Head of caudate nucleus (tissue), 42 donors: ENCODE measurements at regions of chr7 and their contacts with region 1.

Region 1: DNA sequence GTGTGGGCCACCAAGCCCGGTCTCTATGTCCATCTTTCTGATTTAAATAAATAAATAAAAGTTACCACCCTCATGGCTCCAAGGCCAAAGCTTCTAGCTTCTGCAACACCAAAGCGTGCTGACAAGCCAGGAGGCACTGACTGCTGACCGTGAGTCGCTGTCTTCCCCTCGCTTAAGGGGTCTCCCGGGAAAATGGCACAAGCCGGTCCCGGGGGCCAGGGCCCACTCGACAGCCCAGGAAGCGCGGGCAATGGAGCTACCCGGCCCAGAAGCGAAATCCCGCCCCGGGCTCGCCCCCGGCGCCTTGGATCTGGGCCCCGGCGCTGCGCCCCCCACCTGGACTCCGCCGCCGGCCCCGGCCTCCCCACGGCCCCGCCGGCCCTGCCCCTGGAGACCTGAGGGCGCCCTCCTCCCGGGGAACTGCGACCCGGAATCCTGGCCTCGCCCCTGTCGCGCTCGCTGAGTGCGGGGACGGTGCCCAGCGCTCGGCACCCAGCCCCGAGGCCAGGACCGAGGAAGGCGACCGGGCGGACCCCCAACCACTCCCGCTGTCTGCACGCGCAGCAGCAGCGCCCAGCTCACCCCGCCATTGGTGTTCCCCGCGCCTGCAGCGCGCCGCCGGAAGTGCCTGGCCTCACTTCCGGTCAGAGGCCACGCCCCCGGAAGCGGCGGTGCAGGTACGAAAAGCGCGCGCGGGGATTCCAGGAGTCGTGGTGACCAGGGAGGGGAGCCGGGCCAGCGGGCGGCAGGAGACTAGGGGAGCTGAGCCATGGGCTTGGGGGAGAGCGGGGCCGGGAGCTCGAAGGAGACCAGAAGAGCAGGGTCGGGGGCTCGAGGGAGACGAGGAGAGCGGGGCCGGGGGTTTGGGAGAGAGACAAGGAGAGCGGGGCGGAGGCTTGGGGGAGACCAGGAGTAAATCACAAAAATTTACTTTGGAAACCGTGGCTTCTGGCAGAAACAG is at the starts of genes MRM2 and NUDT1:
- DNase-seq: peak; percentile 39 to 92 (median 81)

Region 2: GRCh38 chr7:2317556-2318293 is 75.9 kb after region 1 on chr7:
- intact Hi-C with region 1: loop called (anchors 5 kb)
- DNase-seq: no peak

Region 3: DNA sequence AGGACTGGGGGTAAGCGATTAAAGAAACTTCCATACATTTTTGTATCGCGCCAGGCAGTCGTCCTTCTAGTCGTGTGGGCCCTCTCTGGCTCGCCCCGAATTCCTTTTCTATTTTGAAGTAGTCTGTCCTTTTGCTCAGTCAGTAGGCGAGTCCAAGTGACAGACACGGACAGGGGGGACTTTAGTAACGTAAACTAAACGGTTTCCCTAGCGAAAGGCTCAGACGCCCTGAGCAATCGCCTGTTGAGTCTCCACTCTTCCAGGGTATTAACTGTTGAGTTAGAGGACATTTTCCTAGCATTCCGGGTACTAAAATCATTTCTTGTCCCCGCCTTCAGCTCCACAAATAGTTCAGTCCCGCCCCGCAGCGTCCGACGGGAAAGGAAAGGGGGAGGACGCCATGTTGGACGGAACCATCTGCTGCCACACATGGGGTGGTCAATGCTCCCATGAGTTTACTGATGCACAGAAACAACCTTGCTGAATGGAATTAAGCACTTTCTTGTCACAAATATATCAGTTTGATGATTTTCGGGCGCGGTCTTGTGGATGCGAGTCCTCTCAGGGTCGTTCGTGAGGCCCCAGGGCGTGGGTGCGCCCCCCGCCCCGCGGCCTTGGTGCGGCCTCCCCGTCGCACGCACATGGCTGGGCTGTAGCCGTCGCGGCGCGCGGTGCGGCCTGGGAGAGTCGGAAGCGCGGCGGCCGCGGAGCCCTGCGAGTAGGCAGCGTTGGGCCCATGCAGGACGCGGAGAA is 112.5 kb after region 1 on chr7 and contains the start of gene EIF3B:
- intact Hi-C with region 1: loop called (anchors 10 kb)
- DNase-seq: peak; percentile 73 to 95 (median 87)